K562 (cell line): ENCODE measurements at regions of chr6 and their contacts with region 1.

Region 1: GRCh38 chr6:52233975-52234823 is 10.1 kb downstream of the IL17F start:
- DNase-seq: peak; percentile 18 to 65 (median 34)
- ATAC-seq: peak; percentile 97
- H3K4me3 ChIP-seq: no peak overlapping the region
- H3K27ac ChIP-seq: no peak overlapping the region
- H3K4me1 ChIP-seq: no peaks in the 10 kb centered on the region
- H3K27me3 ChIP-seq: peaks cover 23 to 30% of the 10 kb centered on the region in 2 experiments; a peak in 4 of 5 replicates
- CTCF ChIP-seq: peak; percentile 58 to 72 (median 71); a peak in 5 of 6 replicates
- EP300 ChIP-seq: no peak
- POLR2A ChIP-seq: no peak
- RAD21 ChIP-seq: peak; percentile 79 to 81

Region 2: GRCh38 chr6:52087498-52087999 is 146.7 kb before region 1 on chr6 and contains the start of gene PKHD1:
- CTCF ChIA-PET with region 1: no interaction called
- POLR2A ChIA-PET with region 1: no interaction called
- in situ Hi-C with region 1: no loop called
- intact Hi-C with region 1: loop called (anchors 10 kb)
- DNase-seq: peak in 2 of 4 experiments; percentile 17 to 19
- ATAC-seq: peak; percentile 76
- H3K4me3 ChIP-seq: no peak within 1 kb of the TSS
- H3K27ac ChIP-seq: no peak within 1 kb of the TSS
- H3K4me1 ChIP-seq: no peaks in the 10 kb centered on the region
- H3K27me3 ChIP-seq: no peaks in the 10 kb centered on the region
- CTCF ChIP-seq: peak; percentile 21 to 48 (median 44); a peak in 4 of 6 replicates
- EP300 ChIP-seq: no peak
- POLR2A ChIP-seq: no peak
- RAD21 ChIP-seq: peak; percentile 9 to 41; a peak in 2 of 4 replicates
- polyA plus RNA-seq, gene PKHD1: not detected

Region 3: GRCh38 chr6:52144201-52145076 is 89.8 kb before region 1 on chr6:
- CTCF ChIA-PET with region 1: no interaction called
- POLR2A ChIA-PET with region 1: no interaction called
- in situ Hi-C with region 1: no loop called
- intact Hi-C with region 1: no loop called
- DNase-seq: no peak
- ATAC-seq: no peak
- H3K4me3 ChIP-seq: no peak overlapping the region
- H3K27ac ChIP-seq: no peak overlapping the region
- H3K4me1 ChIP-seq: no peaks in the 10 kb centered on the region
- H3K27me3 ChIP-seq: peaks cover 5 to 18% of the 10 kb centered on the region in 2 experiments; a peak in 3 of 5 replicates
- CTCF ChIP-seq: no peak
- EP300 ChIP-seq: no peak
- POLR2A ChIP-seq: no peak
- RAD21 ChIP-seq: no peak